ENCODE measurements at regions of chr1 and their contacts with region 1.

Region 1: GRCh38 chr1:26826261-26827105 is at the start of gene ZDHHC18:
- DNase-seq: no peak
- ATAC-seq: peak; percentile 78
- H3K4me3 ChIP-seq: peak within 1 kb of the TSS; percentile 86
- H3K27ac ChIP-seq: peak within 1 kb of the TSS; percentile 81
- H3K4me1 ChIP-seq: peaks cover 18% of the 10 kb centered on the region
- H3K27me3 ChIP-seq: no peaks in the 10 kb centered on the region
- CTCF ChIP-seq: peak; percentile 31 to 64 (median 54); a peak in 5 of 6 replicates
- EP300 ChIP-seq: no peak
- POLR2A ChIP-seq: peak; percentile 70
- RAD21 ChIP-seq: peak; percentile 18; the same call in 1 of the 2 replicates
- polyA plus RNA-seq, gene ZDHHC18: 0.40 to 1.2 TPM

Region 2: GRCh38 chr1:26761217-26761616 is 65.3 kb before region 1 on chr1:
- CTCF ChIA-PET with region 1: no interaction called
- POLR2A ChIA-PET with region 1: no interaction called
- RAD21 ChIA-PET with region 1: no interaction called
- SMC1A ChIA-PET with region 1: no interaction called
- in situ Hi-C with region 1: no loop called
- intact Hi-C with region 1: no loop called
- DNase-seq: no peak
- ATAC-seq: no peak
- H3K4me3 ChIP-seq: no peak overlapping the region
- H3K27ac ChIP-seq: no peak overlapping the region
- H3K4me1 ChIP-seq: no peaks in the 10 kb centered on the region
- H3K27me3 ChIP-seq: no peaks in the 10 kb centered on the region
- CTCF ChIP-seq: no peak
- EP300 ChIP-seq: no peak
- POLR2A ChIP-seq: no peak
- RAD21 ChIP-seq: no peak

Region 3: DNA sequence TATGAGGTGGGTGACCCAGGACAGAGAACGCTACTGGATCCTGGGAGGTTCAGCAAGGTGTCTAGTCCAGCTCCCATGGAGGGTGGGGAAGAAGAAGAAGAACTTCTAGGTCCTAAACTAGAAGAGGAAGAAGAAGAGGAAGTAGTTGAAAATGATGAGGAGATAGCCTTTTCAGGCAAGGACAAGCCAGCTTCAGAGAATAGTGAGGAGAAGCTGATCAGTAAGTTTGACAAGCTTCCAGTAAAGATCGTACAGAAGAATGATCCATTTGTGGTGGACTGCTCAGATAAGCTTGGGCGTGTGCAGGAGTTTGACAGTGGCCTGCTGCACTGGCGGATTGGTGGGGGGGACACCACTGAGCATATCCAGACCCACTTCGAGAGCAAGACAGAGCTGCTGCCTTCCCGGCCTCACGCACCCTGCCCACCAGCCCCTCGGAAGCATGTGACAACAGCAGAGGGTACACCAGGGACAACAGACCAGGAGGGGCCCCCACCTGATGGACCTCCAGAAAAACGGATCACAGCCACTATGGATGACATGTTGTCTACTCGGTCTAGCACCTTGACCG is 47.3 kb before region 1 on chr1:
- CTCF ChIA-PET with region 1: no interaction called
- POLR2A ChIA-PET with region 1: no interaction called
- RAD21 ChIA-PET with region 1: no interaction called
- SMC1A ChIA-PET with region 1: no interaction called
- in situ Hi-C with region 1: loop called (anchors 5 kb)
- intact Hi-C with region 1: no loop called
- DNase-seq: no peak
- ATAC-seq: no peak
- H3K4me3 ChIP-seq: no peak overlapping the region
- H3K27ac ChIP-seq: no peak overlapping the region
- H3K4me1 ChIP-seq: peaks cover under 1% of the 10 kb centered on the region; the same call in 1 of the 2 replicates
- H3K27me3 ChIP-seq: no peaks in the 10 kb centered on the region
- CTCF ChIP-seq: no peak
- EP300 ChIP-seq: no peak
- POLR2A ChIP-seq: no peak
- RAD21 ChIP-seq: no peak